Endothelial cell of umbilical vein (primary cell): ENCODE measurements at regions of chr6 and their contacts with region 1.

Region 1: DNA sequence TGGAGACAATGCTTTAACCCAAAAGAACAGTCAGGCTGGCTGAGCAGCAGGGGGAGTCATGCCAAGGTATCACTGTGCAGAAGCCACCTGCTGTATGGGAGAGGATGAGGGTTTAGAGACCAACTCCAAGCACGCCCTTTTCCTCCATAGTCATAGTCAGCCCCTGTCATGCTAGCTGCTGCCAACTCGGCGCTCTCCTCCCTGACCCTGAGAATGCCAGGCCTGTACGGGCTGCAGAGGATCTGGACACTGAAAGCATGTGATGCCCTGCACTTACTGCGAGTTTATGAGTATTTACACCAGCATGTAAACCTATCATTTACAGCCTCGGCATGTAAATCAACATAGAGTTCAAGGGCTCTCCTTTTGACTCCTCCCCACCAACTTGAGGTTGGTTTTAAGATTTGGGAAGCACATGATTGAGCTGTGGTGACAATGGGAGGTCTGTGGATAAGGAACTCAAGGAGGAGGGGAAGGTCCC is 11.7 kb upstream of the SCUBE3 start:
- DNase-seq: no peak
- H3K4me3 ChIP-seq: no peak overlapping the region
- H3K27ac ChIP-seq: no peak overlapping the region
- H3K4me1 ChIP-seq: no peaks in the 10 kb centered on the region
- H3K27me3 ChIP-seq: peaks cover 17 to 20% of the 10 kb centered on the region in 2 experiments
- CTCF ChIP-seq: no peak
- POLR2A ChIP-seq: no peak

Region 2: GRCh38 chr6:34273242-34273805 is 928.8 kb before region 1 on chr6:
- CTCF ChIA-PET with region 1: no interaction called
- POLR2A ChIA-PET with region 1: no interaction called
- dilution Hi-C with region 1: no loop called
- intact Hi-C with region 1: no loop called
- DNase-seq: peak; percentile 95
- H3K4me3 ChIP-seq: no peak overlapping the region
- H3K27ac ChIP-seq: peak overlapping the region; percentile 6
- H3K4me1 ChIP-seq: peaks cover 18% of the 10 kb centered on the region
- H3K27me3 ChIP-seq: no peaks in the 10 kb centered on the region
- CTCF ChIP-seq: no peak
- POLR2A ChIP-seq: peak; percentile 75

Region 3: GRCh38 chr6:34876472-34876871 is 325.6 kb before region 1 on chr6:
- CTCF ChIA-PET with region 1: no interaction called
- POLR2A ChIA-PET with region 1: no interaction called
- dilution Hi-C with region 1: no loop called
- intact Hi-C with region 1: no loop called
- DNase-seq: no peak
- H3K4me3 ChIP-seq: no peak overlapping the region
- H3K27ac ChIP-seq: no peak overlapping the region
- H3K4me1 ChIP-seq: no peaks in the 10 kb centered on the region
- H3K27me3 ChIP-seq: no peaks in the 10 kb centered on the region
- CTCF ChIP-seq: no peak
- POLR2A ChIP-seq: no peak

Region 4: DNA sequence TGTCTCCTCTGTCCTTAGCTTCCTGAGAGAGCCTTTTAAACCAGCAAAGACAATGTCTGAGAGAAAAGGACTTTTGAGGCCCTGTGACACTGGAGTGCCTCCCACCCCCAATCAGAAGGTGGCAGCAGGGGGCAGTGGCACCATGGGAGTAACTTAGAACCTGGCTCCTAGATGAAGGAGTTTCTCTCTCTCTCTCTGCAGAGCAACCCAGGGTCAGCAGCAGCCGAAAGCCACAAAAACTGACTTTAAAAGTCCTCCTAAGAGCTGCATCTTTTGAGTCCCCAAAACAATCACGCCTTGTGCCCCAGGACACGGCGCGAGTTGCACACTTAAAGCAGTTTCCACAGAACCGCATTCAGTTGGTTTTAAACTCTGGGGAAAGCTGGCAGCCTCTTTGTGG is 55.7 kb before region 1 on chr6:
- CTCF ChIA-PET with region 1: interaction called, 168 read pairs
- POLR2A ChIA-PET with region 1: interaction called, 3 read pairs
- dilution Hi-C with region 1: no loop called
- intact Hi-C with region 1: loop called (anchors 1 kb)
- DNase-seq: peak; percentile 47
- H3K4me3 ChIP-seq: no peak overlapping the region
- H3K27ac ChIP-seq: no peak overlapping the region
- H3K4me1 ChIP-seq: peaks cover 11% of the 10 kb centered on the region
- H3K27me3 ChIP-seq: no peaks in the 10 kb centered on the region
- CTCF ChIP-seq: peak; percentile 51 to 70
- POLR2A ChIP-seq: no peak

Region 5: GRCh38 chr6:35181933-35182612 is 20.0 kb before region 1 on chr6:
- CTCF ChIA-PET with region 1: interaction called, 21 read pairs
- POLR2A ChIA-PET with region 1: no interaction called
- dilution Hi-C with region 1: no loop called
- intact Hi-C with region 1: no loop called
- DNase-seq: peak; percentile 15
- H3K4me3 ChIP-seq: no peak overlapping the region
- H3K27ac ChIP-seq: no peak overlapping the region
- H3K4me1 ChIP-seq: peaks cover 9% of the 10 kb centered on the region
- H3K27me3 ChIP-seq: peaks cover 0 to 3% of the 10 kb centered on the region in 2 experiments
- CTCF ChIP-seq: no peak
- POLR2A ChIP-seq: no peak

Region 6: GRCh38 chr6:35213824-35214756 is 12.0 kb after region 1 on chr6 and contains the start of gene SCUBE3:
- CTCF ChIA-PET with region 1: interaction called, 63 read pairs
- POLR2A ChIA-PET with region 1: interaction called, 3 read pairs
- dilution Hi-C with region 1: no loop called
- intact Hi-C with region 1: no loop called
- DNase-seq: peak; percentile 31
- H3K4me3 ChIP-seq: peak within 1 kb of the TSS; percentile 14 to 40 (median 36)
- H3K27ac ChIP-seq: no peak within 1 kb of the TSS
- H3K4me1 ChIP-seq: peaks cover 5% of the 10 kb centered on the region
- H3K27me3 ChIP-seq: peaks cover 34 to 44% of the 10 kb centered on the region in 2 experiments
- CTCF ChIP-seq: no peak
- POLR2A ChIP-seq: no peak
- total RNA-seq, gene SCUBE3: 0.62 and 1.5 TPM in 2 replicates

Region 7: GRCh38 chr6:35461244-35461643 is 259.1 kb after region 1 on chr6:
- CTCF ChIA-PET with region 1: no interaction called
- POLR2A ChIA-PET with region 1: no interaction called
- dilution Hi-C with region 1: no loop called
- intact Hi-C with region 1: no loop called
- DNase-seq: no peak
- H3K4me3 ChIP-seq: no peak overlapping the region
- H3K27ac ChIP-seq: no peak overlapping the region
- H3K4me1 ChIP-seq: no peaks in the 10 kb centered on the region
- H3K27me3 ChIP-seq: no peaks in the 10 kb centered on the region
- CTCF ChIP-seq: no peak
- POLR2A ChIP-seq: no peak